CD8-positive, alpha-beta T cell (primary cell): ENCODE measurements at regions of chr11 and their contacts with region 1.

Region 1: DNA sequence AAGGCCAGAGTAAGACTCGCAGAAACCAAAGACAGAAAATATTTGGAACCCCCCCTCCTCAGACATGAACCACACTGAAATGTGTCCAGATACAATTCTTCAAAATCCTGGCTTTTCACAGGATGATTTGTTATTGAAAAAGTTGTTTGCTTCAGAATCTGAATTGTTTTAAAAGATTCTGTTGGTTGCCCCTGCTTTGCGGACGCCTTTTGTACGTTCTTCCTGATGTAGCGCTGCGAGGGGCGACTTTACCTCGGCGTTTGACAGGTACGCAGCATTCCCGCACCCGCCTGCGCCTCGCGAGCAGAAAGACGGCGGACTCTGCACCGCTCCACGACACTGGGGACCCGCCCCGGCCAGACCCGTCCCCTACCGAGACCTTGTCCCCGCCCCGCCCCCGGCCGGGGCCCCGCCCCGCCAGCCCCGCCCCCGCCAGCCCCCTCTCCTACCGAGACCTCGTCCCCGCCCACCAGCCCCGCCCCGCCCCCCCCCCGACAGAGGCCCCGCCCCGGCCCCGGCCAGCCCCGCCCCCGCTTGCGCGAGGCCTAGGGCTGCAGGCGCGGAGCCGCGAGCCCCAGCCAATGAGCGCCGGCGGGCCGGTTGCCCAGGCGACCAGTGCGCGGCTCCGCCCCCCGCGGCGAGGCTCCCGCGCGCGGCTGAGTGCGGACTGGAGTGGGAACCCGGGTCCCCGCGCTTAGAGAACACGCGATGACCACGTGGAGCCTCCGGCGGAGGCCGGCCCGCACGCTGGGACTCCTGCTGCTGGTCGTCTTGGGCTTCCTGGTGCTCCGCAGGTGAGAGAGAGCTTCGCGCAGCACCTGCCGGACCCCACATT is at the start of gene GLB1L2:
- DNase-seq: peak; percentile 51 to 89 (median 77)
- ATAC-seq: peak; percentile 88
- H3K4me3 ChIP-seq: peak within 1 kb of the TSS; percentile 73 to 76
- H3K4me3 Mint-ChIP-seq: peak within 1 kb of the TSS; percentile 86
- H3K27ac ChIP-seq: peak within 1 kb of the TSS in 1 of 2 experiments; percentile 19
- H3K27ac Mint-ChIP-seq: no peak within 1 kb of the TSS
- H3K4me1 ChIP-seq: peaks cover 14% of the 10 kb centered on the region
- H3K4me1 Mint-ChIP-seq: peaks cover 13% of the 10 kb centered on the region
- H3K27me3 ChIP-seq: no peaks in the 10 kb centered on the region
- H3K27me3 Mint-ChIP-seq: peaks cover 13% of the 10 kb centered on the region
- CTCF ChIP-seq: no peak
- total RNA-seq, gene GLB1L2: 0.92 to 1.00 TPM

Region 2: DNA sequence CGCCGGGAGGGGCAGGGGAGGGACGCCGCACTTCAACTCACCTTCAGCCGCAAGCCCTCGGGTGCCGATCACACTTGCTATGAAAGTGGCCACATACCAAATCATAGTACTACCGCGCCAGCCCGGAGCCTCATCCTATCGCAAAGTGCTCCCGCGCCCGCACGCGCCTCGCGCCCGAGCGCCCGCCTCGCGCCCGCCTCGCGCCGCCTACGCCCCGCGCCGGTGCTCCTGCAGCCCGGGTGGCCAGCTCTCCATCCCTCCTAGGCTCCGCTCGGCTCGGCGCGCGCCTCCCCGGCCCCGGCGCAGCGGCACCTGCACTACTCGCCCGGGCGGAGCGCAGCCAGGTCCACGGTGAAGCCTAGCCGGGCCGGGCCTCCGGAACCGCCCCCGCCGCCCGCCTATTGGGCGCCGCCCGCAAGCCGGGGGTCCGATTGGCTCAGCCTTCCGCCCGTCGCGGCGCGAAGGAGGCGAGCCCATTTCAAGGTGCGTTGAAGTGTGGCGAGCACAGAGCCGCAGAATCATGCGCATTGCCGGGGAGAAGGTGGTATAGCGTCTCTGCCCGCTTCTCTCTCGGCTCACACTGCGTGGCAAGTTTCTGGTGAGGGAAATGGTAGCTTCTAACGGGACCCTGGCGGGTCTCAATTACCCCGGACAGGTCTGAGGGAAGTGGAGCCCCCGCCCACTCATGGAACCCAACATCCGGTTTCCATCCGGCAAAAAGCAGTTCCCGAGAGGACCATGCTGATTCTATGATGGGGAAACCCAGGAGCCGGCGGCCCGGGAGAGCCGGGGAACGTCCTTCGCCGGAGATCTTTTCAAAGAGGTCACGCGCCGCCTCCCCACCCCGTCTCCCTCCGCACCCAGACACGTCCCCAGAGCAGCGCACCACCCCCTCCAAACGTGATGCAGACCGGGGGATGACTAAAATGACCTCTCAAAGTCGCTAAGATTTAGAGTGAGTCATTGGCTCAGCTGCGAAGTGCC is 374.6 kb before region 1 on chr11 and contains the start of gene IGSF9B:
- CTCF ChIA-PET with region 1: no interaction called
- POLR2A ChIA-PET with region 1: no interaction called
- intact Hi-C with region 1: loop called in 1 of 2 experiments (anchors 5 kb)
- DNase-seq: peak; percentile 82 to 95 (median 90)
- ATAC-seq: peak; percentile 93
- H3K4me3 ChIP-seq: peak within 1 kb of the TSS; percentile 67 to 81
- H3K4me3 Mint-ChIP-seq: peak within 1 kb of the TSS; percentile 90
- H3K27ac ChIP-seq: peak within 1 kb of the TSS; percentile 62 to 64
- H3K27ac Mint-ChIP-seq: peak within 1 kb of the TSS; percentile 86
- H3K4me1 ChIP-seq: peaks cover 29% of the 10 kb centered on the region
- H3K4me1 Mint-ChIP-seq: peaks cover 40% of the 10 kb centered on the region
- H3K27me3 ChIP-seq: peaks cover 0 to 7% of the 10 kb centered on the region in 2 experiments
- H3K27me3 Mint-ChIP-seq: peaks cover 8% of the 10 kb centered on the region
- CTCF ChIP-seq: no peak
- total RNA-seq, gene IGSF9B: 10.1 to 11.6 TPM

Region 3: DNA sequence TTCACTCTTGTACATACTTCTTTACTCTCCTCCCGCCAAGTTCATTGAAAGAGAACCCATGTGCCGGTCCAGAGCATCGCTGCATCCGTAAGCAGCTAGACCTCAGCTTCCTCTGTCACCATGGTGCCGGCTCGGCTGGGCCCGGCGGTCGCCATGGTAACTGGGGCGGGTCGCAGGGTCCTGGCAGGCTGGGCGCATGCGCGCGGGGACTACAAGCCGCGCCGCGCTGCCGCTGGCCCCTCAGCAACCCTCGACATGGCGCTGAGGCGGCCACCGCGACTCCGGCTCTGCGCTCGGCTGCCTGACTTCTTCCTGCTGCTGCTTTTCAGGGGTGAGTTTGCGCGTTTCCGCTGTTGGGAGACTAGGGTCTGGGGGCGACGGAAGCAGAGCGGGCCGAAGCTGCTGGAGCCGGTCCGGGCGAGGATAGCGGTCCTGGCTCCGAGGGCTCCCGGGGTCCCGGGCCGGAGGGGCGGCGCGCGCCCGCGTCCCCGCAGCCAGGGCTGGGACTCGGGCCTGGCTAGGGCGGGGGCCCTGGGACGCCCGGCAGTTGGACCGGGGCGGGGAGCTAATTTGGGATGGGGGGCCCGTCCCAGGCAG is 262.6 kb before region 1 on chr11 and contains the start of gene JAM3:
- CTCF ChIA-PET with region 1: no interaction called
- POLR2A ChIA-PET with region 1: no interaction called
- intact Hi-C with region 1: loop called (anchors 1 to 10 kb)
- DNase-seq: peak; percentile 95 to 99 (median 98)
- ATAC-seq: peak; percentile 91
- H3K4me3 ChIP-seq: peak within 1 kb of the TSS; percentile 52 to 58
- H3K4me3 Mint-ChIP-seq: peak within 1 kb of the TSS; percentile 94
- H3K27ac ChIP-seq: peak within 1 kb of the TSS in 1 of 2 experiments; percentile 50
- H3K27ac Mint-ChIP-seq: peak within 1 kb of the TSS; percentile 87
- H3K4me1 ChIP-seq: peaks cover 6% of the 10 kb centered on the region
- H3K4me1 Mint-ChIP-seq: peaks cover 17% of the 10 kb centered on the region
- H3K27me3 ChIP-seq: no peaks in the 10 kb centered on the region
- H3K27me3 Mint-ChIP-seq: peaks cover 1% of the 10 kb centered on the region
- CTCF ChIP-seq: no peak
- total RNA-seq, gene JAM3: 12.1 to 15.2 TPM

Region 4: GRCh38 chr11:134223836-134224709 is 107.5 kb before region 1 on chr11 and contains the starts of genes NCAPD3 and VPS26B:
- CTCF ChIA-PET with region 1: no interaction called
- POLR2A ChIA-PET with region 1: interaction called, 7 read pairs
- intact Hi-C with region 1: loop called (anchors 1 to 2 kb)
- DNase-seq: peak; percentile 90 to 98 (median 96)
- ATAC-seq: peak; percentile 77
- H3K4me3 ChIP-seq: peak within 1 kb of the TSS; percentile 71 to 88
- H3K4me3 Mint-ChIP-seq: peak within 1 kb of the TSS; percentile 96
- H3K27ac ChIP-seq: peak within 1 kb of the TSS; percentile 84 to 96
- H3K27ac Mint-ChIP-seq: peak within 1 kb of the TSS; percentile 97
- H3K4me1 ChIP-seq: peaks cover 45% of the 10 kb centered on the region
- H3K4me1 Mint-ChIP-seq: peaks cover 65% of the 10 kb centered on the region
- H3K27me3 ChIP-seq: no peaks in the 10 kb centered on the region
- H3K27me3 Mint-ChIP-seq: no peaks in the 10 kb centered on the region
- CTCF ChIP-seq: no peak
- total RNA-seq, gene NCAPD3: 30.2 to 30.4 TPM
- total RNA-seq, gene VPS26B: 36.8 to 37.8 TPM

Region 5: DNA sequence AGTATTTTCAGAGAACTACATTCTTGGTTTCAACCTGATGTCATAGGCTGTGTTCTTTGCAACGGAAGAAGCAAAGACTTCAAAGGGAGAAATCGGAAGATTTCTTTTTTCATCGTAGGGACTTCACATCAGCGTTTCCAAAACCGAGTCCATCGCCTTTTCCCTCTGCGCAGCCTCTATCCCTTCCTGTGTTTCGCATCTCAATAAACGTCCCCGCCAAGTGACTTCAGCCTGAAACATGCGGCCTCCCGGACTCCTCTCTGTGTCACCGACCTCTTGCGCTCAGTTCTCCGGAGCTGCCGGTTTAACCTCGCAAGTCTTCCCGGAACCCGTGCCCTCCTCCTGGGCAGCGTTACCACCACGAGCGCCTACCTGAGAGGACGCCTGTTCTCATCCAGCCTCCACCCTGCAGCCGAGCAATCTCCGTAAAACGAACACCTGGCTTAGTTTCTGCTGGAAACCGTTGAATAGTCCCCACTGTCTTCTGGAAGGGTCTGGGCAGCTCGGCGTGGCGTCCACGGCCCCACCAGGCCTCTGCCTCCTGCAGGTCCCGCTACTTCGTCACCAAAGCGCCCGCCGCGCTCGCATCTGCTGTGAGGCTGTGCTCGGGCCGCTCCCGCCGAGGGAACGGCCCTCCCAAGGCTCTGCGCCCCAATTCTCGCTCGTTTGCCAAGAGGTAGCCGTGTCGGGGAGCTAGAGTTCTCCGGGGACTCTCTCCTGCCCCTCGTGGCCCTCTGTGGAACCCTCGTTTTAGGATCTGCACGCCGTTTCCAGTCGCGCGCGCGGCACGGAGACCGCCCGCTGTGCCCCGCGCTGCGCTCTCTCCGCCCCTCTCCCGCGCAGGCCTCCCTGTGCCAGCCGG is 55.8 kb before region 1 on chr11 and contains the start of gene GLB1L3:
- CTCF ChIA-PET with region 1: interaction called, 5 read pairs
- POLR2A ChIA-PET with region 1: no interaction called
- intact Hi-C with region 1: loop called (anchors 1 kb)
- DNase-seq: peak; percentile 54 to 88 (median 78)
- ATAC-seq: peak; percentile 92
- H3K4me3 ChIP-seq: peak within 1 kb of the TSS; percentile 64 to 65
- H3K4me3 Mint-ChIP-seq: peak within 1 kb of the TSS; percentile 90
- H3K27ac ChIP-seq: peak within 1 kb of the TSS; percentile 32 to 63
- H3K27ac Mint-ChIP-seq: peak within 1 kb of the TSS; percentile 81
- H3K4me1 ChIP-seq: peaks cover 27% of the 10 kb centered on the region
- H3K4me1 Mint-ChIP-seq: peaks cover 46% of the 10 kb centered on the region
- H3K27me3 ChIP-seq: peaks cover 0 to 3% of the 10 kb centered on the region in 2 experiments
- H3K27me3 Mint-ChIP-seq: peaks cover 8% of the 10 kb centered on the region
- CTCF ChIP-seq: peak; percentile 65
- total RNA-seq, gene GLB1L3: 0.58 to 0.87 TPM